ENCODE measurements at regions of chr5 and their contacts with region 1.

Region 1: DNA sequence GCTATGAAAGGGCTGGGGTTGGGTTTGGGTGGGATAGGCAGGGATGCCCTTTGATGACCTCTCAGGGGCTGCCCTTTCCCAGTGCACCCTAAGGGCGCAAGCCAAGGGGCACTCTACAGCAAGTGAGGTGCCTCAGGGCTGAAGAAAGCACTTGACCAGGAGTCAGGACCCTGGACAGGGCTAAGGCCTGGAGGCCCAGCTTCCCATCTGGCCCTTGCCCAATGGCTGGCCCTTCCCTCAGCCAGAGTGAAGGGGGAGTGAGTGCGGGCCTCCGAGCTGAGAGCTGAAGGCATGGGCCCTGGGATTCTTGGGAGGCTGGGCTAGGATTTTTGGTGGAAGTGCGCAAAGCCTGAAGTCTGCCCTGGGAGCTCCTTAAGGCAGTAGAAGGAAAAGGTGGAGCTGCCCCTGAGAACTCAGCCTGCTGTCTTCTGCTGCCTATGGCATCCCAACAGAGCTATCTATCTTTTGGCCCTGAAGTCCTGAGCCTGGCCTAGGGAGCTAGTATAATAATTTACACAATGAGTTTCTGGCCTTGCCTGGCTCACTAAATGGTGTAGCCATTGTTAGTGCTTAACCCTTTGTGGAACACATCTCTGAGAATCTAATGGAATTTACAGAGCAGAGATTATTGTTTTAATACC is 16.4 kb downstream of the JADE2 start:
- DNase-seq: no peak
- ATAC-seq: peak; percentile 23
- H3K4me3 ChIP-seq: no peak overlapping the region
- H3K27ac ChIP-seq: peak overlapping the region; percentile 91
- H3K4me1 ChIP-seq: peaks cover 63% of the 10 kb centered on the region
- H3K27me3 ChIP-seq: no peaks in the 10 kb centered on the region
- CTCF ChIP-seq: no peak
- EP300 ChIP-seq: no peak
- POLR2A ChIP-seq: no peak
- RAD21 ChIP-seq: no peak

Region 2: DNA sequence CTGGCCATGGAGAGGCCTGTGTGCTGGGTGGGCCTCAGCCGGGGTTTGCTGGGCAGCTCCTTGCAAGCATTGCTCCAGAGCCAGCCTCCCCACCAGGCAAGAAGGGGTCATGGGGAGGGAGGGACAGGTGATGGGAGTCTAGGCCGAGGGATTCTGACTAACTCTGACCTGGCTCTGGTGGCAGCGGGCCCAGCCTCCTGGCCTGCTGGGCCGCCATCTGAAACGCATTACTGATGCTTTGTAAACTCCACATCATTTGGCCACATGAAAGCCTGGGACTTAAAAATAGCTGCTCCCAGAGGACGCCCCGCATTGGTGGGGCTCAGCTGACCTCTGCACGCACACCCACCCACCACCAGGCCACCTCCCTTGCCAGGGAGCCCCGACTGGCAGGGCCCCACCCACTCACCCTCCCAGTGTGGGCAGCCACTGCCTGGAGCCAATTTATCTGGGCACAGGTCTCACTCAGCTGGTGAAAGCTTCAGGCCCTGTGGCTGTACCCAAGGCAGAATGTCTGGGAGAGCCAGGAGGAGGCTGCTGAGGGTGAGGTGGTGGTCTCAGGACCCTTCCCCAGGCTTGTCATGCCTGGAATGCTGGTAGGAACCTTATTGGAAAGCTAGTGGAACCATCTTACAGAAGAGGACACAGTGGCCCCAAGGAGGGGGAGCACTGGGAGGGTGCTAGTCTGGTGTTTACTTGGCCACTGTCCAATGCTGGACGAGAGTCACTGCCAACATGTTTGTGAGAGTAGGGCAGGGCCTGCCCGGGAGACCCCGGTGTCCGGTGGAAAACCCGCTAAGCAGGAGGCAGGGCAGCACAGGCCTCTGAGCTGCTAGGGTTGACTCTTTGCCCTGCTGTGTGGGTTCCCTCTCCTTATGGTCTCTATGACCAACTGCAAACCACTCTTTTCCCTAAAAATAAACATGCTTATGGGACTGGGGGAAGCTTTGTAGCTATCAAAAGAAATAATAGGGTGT is 416.5 kb before region 1 on chr5:
- CTCF ChIA-PET with region 1: no interaction called
- POLR2A ChIA-PET with region 1: no interaction called
- RAD21 ChIA-PET with region 1: interaction called, 3 read pairs
- SMC1A ChIA-PET with region 1: no interaction called
- in situ Hi-C with region 1: no loop called
- intact Hi-C with region 1: loop called (anchors 5 kb)
- DNase-seq: no peak
- ATAC-seq: peak; percentile 41
- H3K4me3 ChIP-seq: no peak overlapping the region
- H3K27ac ChIP-seq: peak overlapping the region; percentile 47
- H3K4me1 ChIP-seq: peaks cover 64% of the 10 kb centered on the region
- H3K27me3 ChIP-seq: no peaks in the 10 kb centered on the region
- CTCF ChIP-seq: no peak
- EP300 ChIP-seq: 0 out of 4 replicates have a peak, but pooled peaks of 1 of the 2 experiments have one; percentile 11
- POLR2A ChIP-seq: no peak
- RAD21 ChIP-seq: no peak

Region 3: GRCh38 chr5:134555890-134556311 is 14.0 kb after region 1 on chr5:
- CTCF ChIA-PET with region 1: interaction called, 20 read pairs
- POLR2A ChIA-PET with region 1: interaction called, 113 read pairs
- RAD21 ChIA-PET with region 1: interaction called, 47 read pairs
- SMC1A ChIA-PET with region 1: interaction called, 85 read pairs
- in situ Hi-C with region 1: no loop called
- intact Hi-C with region 1: loop called (anchors 2 kb)
- DNase-seq: no peak
- ATAC-seq: peak; percentile 66
- H3K4me3 ChIP-seq: no peak overlapping the region
- H3K27ac ChIP-seq: peak overlapping the region; percentile 91
- H3K4me1 ChIP-seq: peaks cover 42% of the 10 kb centered on the region
- H3K27me3 ChIP-seq: no peaks in the 10 kb centered on the region
- CTCF ChIP-seq: no peak
- EP300 ChIP-seq: no peak
- POLR2A ChIP-seq: no peak
- RAD21 ChIP-seq: no peak

Region 4: DNA sequence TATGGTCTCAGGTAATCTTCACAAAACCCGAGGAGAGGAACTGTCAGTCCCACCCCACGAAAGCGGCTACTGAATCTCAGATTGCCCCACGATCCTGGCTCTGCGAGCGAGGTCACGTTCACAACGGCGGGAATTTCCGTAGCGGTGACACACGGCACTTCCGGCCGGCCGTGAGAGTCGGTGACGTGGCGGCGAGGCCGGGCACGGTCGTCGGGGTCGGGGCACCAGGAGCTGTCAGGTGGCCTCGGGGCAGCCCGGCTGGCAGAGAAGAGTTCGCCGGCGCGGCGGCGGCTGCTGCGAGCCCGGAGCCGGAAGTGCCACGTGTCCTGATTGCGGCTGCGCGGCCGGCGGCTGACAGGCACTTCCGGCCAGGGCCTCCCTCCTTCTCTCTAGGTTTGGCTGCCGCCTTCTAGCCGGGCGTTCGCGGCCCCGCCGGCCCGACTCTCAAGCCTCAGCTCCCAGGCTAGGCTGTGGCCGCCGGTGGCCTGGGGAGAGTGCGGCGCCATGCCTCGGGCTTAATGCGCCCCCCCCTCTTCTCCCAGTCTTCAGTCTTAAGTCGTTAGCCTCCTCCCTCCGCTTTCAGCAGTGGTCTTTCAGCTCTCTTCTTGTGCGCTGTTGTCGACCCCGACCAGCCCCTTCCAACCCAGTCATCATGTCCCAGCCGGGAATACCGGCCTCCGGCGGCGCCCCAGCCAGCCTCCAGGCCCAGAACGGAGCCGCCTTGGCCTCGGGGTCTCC is 106.7 kb after region 1 on chr5 and contains the start of gene SEC24A:
- CTCF ChIA-PET with region 1: no interaction called
- POLR2A ChIA-PET with region 1: interaction called, 6 read pairs
- RAD21 ChIA-PET with region 1: no interaction called
- SMC1A ChIA-PET with region 1: no interaction called
- in situ Hi-C with region 1: no loop called
- intact Hi-C with region 1: loop called (anchors 5 kb)
- DNase-seq: no peak
- ATAC-seq: peak; percentile 89
- H3K4me3 ChIP-seq: peak within 1 kb of the TSS; percentile 100
- H3K27ac ChIP-seq: peak within 1 kb of the TSS; percentile 98
- H3K4me1 ChIP-seq: peaks cover 18% of the 10 kb centered on the region
- H3K27me3 ChIP-seq: no peaks in the 10 kb centered on the region
- CTCF ChIP-seq: no peak
- EP300 ChIP-seq: peak in 1 of 2 experiments; percentile 40; a peak in 1 of 4 replicates
- POLR2A ChIP-seq: peak; percentile 91
- RAD21 ChIP-seq: no peak
- polyA plus RNA-seq, gene SEC24A: 7.1 to 12.5 TPM